ENCODE measurements at regions of chr17 and their contacts with region 1.

Region 1: DNA sequence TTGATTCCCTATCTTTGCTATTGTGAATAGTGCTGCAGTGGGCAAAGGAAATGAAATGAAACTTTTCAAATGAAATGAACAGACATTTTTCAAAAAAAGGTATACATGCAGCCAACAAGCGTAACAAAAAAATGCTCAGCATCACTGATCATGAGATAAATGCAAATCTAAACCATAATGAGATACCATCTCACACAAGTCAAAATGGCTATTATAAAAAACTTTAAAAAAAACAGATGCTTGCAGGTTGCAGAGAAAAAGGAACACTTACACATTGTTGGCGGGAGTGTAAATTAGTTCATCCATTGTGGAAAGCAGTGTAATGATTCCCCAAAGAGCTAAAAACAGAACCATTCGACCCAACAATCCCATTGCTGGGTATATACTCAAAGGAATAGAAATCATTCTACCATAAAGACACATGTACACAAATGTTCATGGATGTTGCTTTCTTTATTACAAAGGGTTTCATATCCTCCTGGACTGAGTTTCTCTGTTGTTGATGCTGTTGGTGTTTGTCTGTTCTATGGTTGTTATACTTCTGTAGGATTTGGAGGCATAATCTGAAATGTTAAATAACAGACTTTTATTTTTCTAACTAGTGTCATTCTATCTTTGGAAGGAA is 99.3 kb upstream of the SOX9 start:
- DNase-seq: no peak
- CTCF ChIP-seq: no peak

Region 2: GRCh38 chr17:72034000-72034399 is 12.5 kb after region 1 on chr17:
- CTCF ChIA-PET with region 1: interaction called, 10 read pairs
- POLR2A ChIA-PET with region 1: no interaction called
- DNase-seq: peak; percentile 24
- CTCF ChIP-seq: no peak